Sigmoid colon (tissue), 7 donors: ENCODE measurements at regions of chr15 and their contacts with region 1.

Region 1: GRCh38 chr15:25089577-25089976 is 134.8 kb downstream of the SNRPN start:
- DNase-seq: no peak
- H3K4me3 ChIP-seq: no peak overlapping the region
- H3K27ac ChIP-seq: no peak overlapping the region
- H3K4me1 ChIP-seq: no peaks in the 10 kb centered on the region
- H3K27me3 ChIP-seq: no peaks in the 10 kb centered on the region
- CTCF ChIP-seq: no peak
- EP300 ChIP-seq: no peak
- POLR2A ChIP-seq: no peak

Region 2: GRCh38 chr15:24985224-24985623 is 104.4 kb before region 1 on chr15:
- intact Hi-C with region 1: loop called (anchors 5 kb)
- DNase-seq: no peak
- H3K4me3 ChIP-seq: no peak overlapping the region
- H3K27ac ChIP-seq: no peak overlapping the region
- H3K4me1 ChIP-seq: no peaks in the 10 kb centered on the region
- H3K27me3 ChIP-seq: no peaks in the 10 kb centered on the region
- CTCF ChIP-seq: no peak
- EP300 ChIP-seq: no peak
- POLR2A ChIP-seq: no peak